Naive thymus-derived CD4-positive, alpha-beta T cell (primary cell): ENCODE measurements at regions of chr19 and their contacts with region 1.

Region 1: GRCh38 chr19:29714953-29715700 is at the start of gene C19orf12:
- DNase-seq: peak in 7 of 9 donors; percentile 35 to 84 (median 81)
- ATAC-seq: peak; percentile 71
- H3K4me3 ChIP-seq: peak within 1 kb of the TSS; percentile 95
- H3K4me3 Mint-ChIP-seq: peak within 1 kb of the TSS; percentile 86 to 93 (median 92)
- H3K27ac ChIP-seq: peak within 1 kb of the TSS; percentile 97
- H3K27ac Mint-ChIP-seq: peak within 1 kb of the TSS; percentile 88 to 99 (median 96)
- H3K4me1 ChIP-seq: peaks cover 50 to 59% of the 10 kb centered on the region in 2 donors
- H3K4me1 Mint-ChIP-seq: peaks cover 48 to 61% (median 59%) of the 10 kb centered on the region in 7 donors
- H3K27me3 ChIP-seq: no peaks in the 10 kb centered on the region
- H3K27me3 Mint-ChIP-seq: no peaks in the 10 kb centered on the region
- total RNA-seq, gene C19orf12: 19.8 to 51.5 (median 24.6) TPM

Region 2: GRCh38 chr19:29212648-29213573 is 502.2 kb before region 1 on chr19 and contains the start of gene UQCRFS1:
- CTCF ChIA-PET with region 1: no interaction called
- POLR2A ChIA-PET with region 1: no interaction called
- intact Hi-C with region 1: loop called in 1 of 2 experiments (anchors 2 kb)
- DNase-seq: peak; percentile 92 to 96 (median 95)
- ATAC-seq: peak; percentile 97
- H3K4me3 ChIP-seq: peak within 1 kb of the TSS; percentile 94
- H3K4me3 Mint-ChIP-seq: peak within 1 kb of the TSS; percentile 89 to 99 (median 96)
- H3K27ac ChIP-seq: peak within 1 kb of the TSS; percentile 96
- H3K27ac Mint-ChIP-seq: peak within 1 kb of the TSS; percentile 88 to 99 (median 98)
- H3K4me1 ChIP-seq: peaks cover 9 to 34% of the 10 kb centered on the region in 2 donors
- H3K4me1 Mint-ChIP-seq: peaks cover 32 to 54% (median 50%) of the 10 kb centered on the region in 7 donors
- H3K27me3 ChIP-seq: no peaks in the 10 kb centered on the region
- H3K27me3 Mint-ChIP-seq: peaks cover 0 to 12% (median 4%) of the 10 kb centered on the region in 5 donors
- total RNA-seq, gene UQCRFS1: 16.1 to 28.3 (median 23.9) TPM

Region 3: GRCh38 chr19:29528350-29528945 is 186.7 kb before region 1 on chr19:
- CTCF ChIA-PET with region 1: no interaction called
- POLR2A ChIA-PET with region 1: no interaction called
- intact Hi-C with region 1: loop called in 1 of 2 experiments (anchors 10 kb)
- DNase-seq: peak in 6 of 9 donors; percentile 8 to 72 (median 25)
- ATAC-seq: peak; percentile 68
- H3K4me3 ChIP-seq: peak overlapping the region; percentile 30
- H3K4me3 Mint-ChIP-seq: peak overlapping the region; percentile 39 to 87 (median 68)
- H3K27ac ChIP-seq: no peak overlapping the region
- H3K27ac Mint-ChIP-seq: peak overlapping the region in 1 of 9 donors; percentile 35
- H3K4me1 ChIP-seq: peaks cover 5 to 8% of the 10 kb centered on the region in 2 donors
- H3K4me1 Mint-ChIP-seq: peaks cover 18 to 33% (median 23%) of the 10 kb centered on the region in 7 donors
- H3K27me3 ChIP-seq: peaks cover 4 to 14% of the 10 kb centered on the region in 2 donors
- H3K27me3 Mint-ChIP-seq: peaks cover 51 to 73% (median 61%) of the 10 kb centered on the region in 5 donors

Region 4: GRCh38 chr19:29665215-29665825 is 49.8 kb before region 1 on chr19 and contains the start of gene PLEKHF1:
- CTCF ChIA-PET with region 1: interaction called, 59 read pairs
- POLR2A ChIA-PET with region 1: interaction called, 88 read pairs
- intact Hi-C with region 1: loop called (anchors 1 kb)
- DNase-seq: peak; percentile 66 to 99 (median 79)
- ATAC-seq: peak; percentile 86
- H3K4me3 ChIP-seq: peak within 1 kb of the TSS; percentile 62
- H3K4me3 Mint-ChIP-seq: peak within 1 kb of the TSS; percentile 89 to 98 (median 93)
- H3K27ac ChIP-seq: peak within 1 kb of the TSS; percentile 94
- H3K27ac Mint-ChIP-seq: peak within 1 kb of the TSS; percentile 88 to 100 (median 97)
- H3K4me1 ChIP-seq: peaks cover 33 to 55% of the 10 kb centered on the region in 2 donors
- H3K4me1 Mint-ChIP-seq: peaks cover 36 to 80% (median 71%) of the 10 kb centered on the region in 7 donors
- H3K27me3 ChIP-seq: no peaks in the 10 kb centered on the region
- H3K27me3 Mint-ChIP-seq: no peaks in the 10 kb centered on the region
- total RNA-seq, gene PLEKHF1: 11.1 to 47.2 (median 17.5) TPM

Region 5: GRCh38 chr19:29694669-29695627 is 20.2 kb before region 1 on chr19:
- CTCF ChIA-PET with region 1: interaction called, 180 read pairs
- POLR2A ChIA-PET with region 1: interaction called, 131 read pairs
- intact Hi-C with region 1: loop called (anchors 1 kb)
- DNase-seq: peak; percentile 70 to 86 (median 78)
- ATAC-seq: peak; percentile 98
- H3K4me3 ChIP-seq: no peak overlapping the region
- H3K4me3 Mint-ChIP-seq: peak overlapping the region in 2 of 10 donors; percentile 14 to 36
- H3K27ac ChIP-seq: no peak overlapping the region
- H3K27ac Mint-ChIP-seq: peak overlapping the region; percentile 63 to 87 (median 81)
- H3K4me1 ChIP-seq: peaks cover 0 to 16% of the 10 kb centered on the region in 2 donors
- H3K4me1 Mint-ChIP-seq: peaks cover 9 to 29% (median 17%) of the 10 kb centered on the region in 7 donors
- H3K27me3 ChIP-seq: no peaks in the 10 kb centered on the region
- H3K27me3 Mint-ChIP-seq: no peaks in the 10 kb centered on the region

Region 6: GRCh38 chr19:29753190-29753933 is 38.2 kb after region 1 on chr19:
- CTCF ChIA-PET with region 1: no interaction called
- POLR2A ChIA-PET with region 1: no interaction called
- intact Hi-C with region 1: no loop called
- DNase-seq: no peak
- ATAC-seq: no peak
- H3K4me3 ChIP-seq: no peak overlapping the region
- H3K4me3 Mint-ChIP-seq: no peak overlapping the region
- H3K27ac ChIP-seq: no peak overlapping the region
- H3K27ac Mint-ChIP-seq: no peak overlapping the region
- H3K4me1 ChIP-seq: no peaks in the 10 kb centered on the region
- H3K4me1 Mint-ChIP-seq: peaks cover 0 to 4% (median 0%) of the 10 kb centered on the region in 7 donors
- H3K27me3 ChIP-seq: no peaks in the 10 kb centered on the region
- H3K27me3 Mint-ChIP-seq: peaks cover 0 to 12% (median 4%) of the 10 kb centered on the region in 5 donors

Region 7: GRCh38 chr19:29771708-29772414 is 56.7 kb after region 1 on chr19:
- CTCF ChIA-PET with region 1: no interaction called
- POLR2A ChIA-PET with region 1: no interaction called
- intact Hi-C with region 1: no loop called
- DNase-seq: peak in 5 of 9 donors; percentile 16 to 31 (median 21)
- ATAC-seq: no peak
- H3K4me3 ChIP-seq: no peak overlapping the region
- H3K4me3 Mint-ChIP-seq: no peak overlapping the region
- H3K27ac ChIP-seq: no peak overlapping the region
- H3K27ac Mint-ChIP-seq: no peak overlapping the region
- H3K4me1 ChIP-seq: no peaks in the 10 kb centered on the region
- H3K4me1 Mint-ChIP-seq: peaks cover 0 to 8% (median 0%) of the 10 kb centered on the region in 7 donors
- H3K27me3 ChIP-seq: no peaks in the 10 kb centered on the region
- H3K27me3 Mint-ChIP-seq: no peaks in the 10 kb centered on the region

Region 8: GRCh38 chr19:29831041-29831548 is 116.0 kb after region 1 on chr19:
- CTCF ChIA-PET with region 1: interaction called, 3 read pairs
- POLR2A ChIA-PET with region 1: interaction called, 13 read pairs
- intact Hi-C with region 1: no loop called
- DNase-seq: peak; percentile 23 to 90 (median 86)
- ATAC-seq: peak; percentile 98
- H3K4me3 ChIP-seq: peak overlapping the region; percentile 32
- H3K4me3 Mint-ChIP-seq: peak overlapping the region; percentile 79 to 88 (median 81)
- H3K27ac ChIP-seq: peak overlapping the region; percentile 81
- H3K27ac Mint-ChIP-seq: peak overlapping the region; percentile 96 to 100 (median 98)
- H3K4me1 ChIP-seq: peaks cover 13 to 41% of the 10 kb centered on the region in 2 donors
- H3K4me1 Mint-ChIP-seq: peaks cover 31 to 56% (median 52%) of the 10 kb centered on the region in 7 donors
- H3K27me3 ChIP-seq: no peaks in the 10 kb centered on the region
- H3K27me3 Mint-ChIP-seq: no peaks in the 10 kb centered on the region

Region 9: DNA sequence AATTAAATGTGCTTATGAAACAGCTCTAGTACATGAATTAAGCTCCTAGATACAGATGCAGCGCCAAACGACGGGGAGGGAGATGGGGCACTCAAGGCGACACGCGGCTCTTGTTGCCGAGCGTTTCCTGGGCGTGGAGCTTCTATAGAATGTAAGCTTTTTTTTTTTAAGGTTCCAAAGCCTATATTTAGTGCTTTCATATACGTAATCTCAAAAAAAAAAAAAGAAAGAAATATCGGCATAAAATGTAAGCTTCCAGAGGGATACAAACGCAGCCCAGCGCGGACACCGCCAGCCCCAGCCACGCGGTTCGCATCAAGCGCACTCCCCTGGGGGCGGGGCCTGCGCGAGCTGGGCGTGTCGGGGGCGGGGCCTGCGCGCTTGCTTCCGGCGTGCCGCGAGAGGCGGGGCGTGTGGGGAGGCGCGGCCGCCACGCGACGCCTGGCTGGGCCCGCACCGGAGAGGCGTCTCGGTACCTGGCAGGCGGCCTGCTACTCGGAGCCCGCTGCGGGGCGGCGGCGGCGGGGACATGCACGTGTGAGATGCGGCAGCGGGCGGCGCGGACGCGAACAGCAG is 226.8 kb after region 1 on chr19 and contains the start of gene URI1:
- CTCF ChIA-PET with region 1: interaction called, 4 read pairs
- POLR2A ChIA-PET with region 1: interaction called, 13 read pairs
- intact Hi-C with region 1: loop called (anchors 1 to 5 kb)
- DNase-seq: peak; percentile 86 to 99 (median 93)
- ATAC-seq: peak; percentile 98
- H3K4me3 ChIP-seq: peak within 1 kb of the TSS; percentile 95
- H3K4me3 Mint-ChIP-seq: peak within 1 kb of the TSS; percentile 92 to 99 (median 96)
- H3K27ac ChIP-seq: peak within 1 kb of the TSS; percentile 88
- H3K27ac Mint-ChIP-seq: peak within 1 kb of the TSS; percentile 86 to 96 (median 94)
- H3K4me1 ChIP-seq: peaks cover 27 to 35% of the 10 kb centered on the region in 2 donors
- H3K4me1 Mint-ChIP-seq: peaks cover 35 to 55% (median 47%) of the 10 kb centered on the region in 7 donors
- H3K27me3 ChIP-seq: no peaks in the 10 kb centered on the region
- H3K27me3 Mint-ChIP-seq: peaks cover 0 to 4% (median 0%) of the 10 kb centered on the region in 5 donors
- total RNA-seq, gene URI1: 55.0 to 106 (median 71.8) TPM